ENCODE measurements at regions of chr3 and their contacts with region 1.

Region 1: GRCh38 chr3:27141668-27142067 is 227.5 kb downstream of the NEK10 start:
- DNase-seq: peak; percentile 26
- ATAC-seq: no peak
- H3K4me3 ChIP-seq: no peak overlapping the region
- H3K27ac ChIP-seq: no peak overlapping the region
- H3K4me1 ChIP-seq: no peaks in the 10 kb centered on the region
- H3K27me3 ChIP-seq: no peaks in the 10 kb centered on the region
- CTCF ChIP-seq: peak; percentile 29 to 75 (median 34); a peak in 5 of 6 replicates
- POLR2A ChIP-seq: no peak
- RAD21 ChIP-seq: peak; percentile 50; the same call in 1 of the 2 replicates

Region 2: GRCh38 chr3:27166888-27167287 is 25.2 kb after region 1 on chr3:
- CTCF ChIA-PET with region 1: no interaction called
- POLR2A ChIA-PET with region 1: no interaction called
- RAD21 ChIA-PET with region 1: no interaction called
- intact Hi-C with region 1: loop called (anchors 1 kb)
- DNase-seq: no peak
- ATAC-seq: no peak
- H3K4me3 ChIP-seq: no peak overlapping the region
- H3K27ac ChIP-seq: no peak overlapping the region
- H3K4me1 ChIP-seq: no peaks in the 10 kb centered on the region
- H3K27me3 ChIP-seq: no peaks in the 10 kb centered on the region
- CTCF ChIP-seq: no peak
- POLR2A ChIP-seq: no peak
- RAD21 ChIP-seq: no peak

Region 3: DNA sequence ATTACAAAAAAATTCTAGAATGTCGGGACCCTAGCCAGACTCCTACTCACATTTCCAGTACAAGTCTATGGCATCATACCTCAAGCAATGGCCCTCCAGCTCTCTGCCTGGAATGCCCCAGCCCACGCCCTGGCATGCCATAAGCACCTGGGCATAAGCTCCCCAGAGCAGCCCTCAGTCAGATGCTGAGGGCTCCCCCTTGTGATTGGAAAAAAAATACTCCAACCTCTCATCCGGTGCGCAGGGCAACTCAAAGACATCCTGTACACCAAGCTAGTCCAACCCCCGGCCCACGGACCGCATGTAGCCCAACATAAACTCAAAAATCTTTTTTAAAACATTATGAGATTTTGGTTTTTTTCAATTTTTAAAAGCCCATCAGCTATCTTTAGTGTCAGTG is 112.2 kb after region 1 on chr3:
- CTCF ChIA-PET with region 1: interaction called, 10 read pairs
- POLR2A ChIA-PET with region 1: no interaction called
- RAD21 ChIA-PET with region 1: interaction called in 1 of 2 experiments, 3 read pairs
- intact Hi-C with region 1: no loop called
- DNase-seq: peak; percentile 51
- ATAC-seq: peak; percentile 100
- H3K4me3 ChIP-seq: no peak overlapping the region
- H3K27ac ChIP-seq: no peak overlapping the region
- H3K4me1 ChIP-seq: no peaks in the 10 kb centered on the region
- H3K27me3 ChIP-seq: no peaks in the 10 kb centered on the region
- CTCF ChIP-seq: peak; percentile 62 to 71 (median 64); a peak in 5 of 6 replicates
- POLR2A ChIP-seq: no peak
- RAD21 ChIP-seq: peak; percentile 85

Measured in HCT116 (cell line).